ENCODE measurements at regions of chr9 and their contacts with region 1.

Region 1: GRCh38 chr9:94656200-94656599 is 16.9 kb upstream of the FBP1 start:
- DNase-seq: peak; percentile 82
- H3K4me3 Mint-ChIP-seq: peak overlapping the region; percentile 73
- H3K27ac Mint-ChIP-seq: peak overlapping the region; percentile 79
- H3K4me1 Mint-ChIP-seq: peaks cover 20% of the 10 kb centered on the region
- H3K27me3 Mint-ChIP-seq: no peaks in the 10 kb centered on the region

Region 2: DNA sequence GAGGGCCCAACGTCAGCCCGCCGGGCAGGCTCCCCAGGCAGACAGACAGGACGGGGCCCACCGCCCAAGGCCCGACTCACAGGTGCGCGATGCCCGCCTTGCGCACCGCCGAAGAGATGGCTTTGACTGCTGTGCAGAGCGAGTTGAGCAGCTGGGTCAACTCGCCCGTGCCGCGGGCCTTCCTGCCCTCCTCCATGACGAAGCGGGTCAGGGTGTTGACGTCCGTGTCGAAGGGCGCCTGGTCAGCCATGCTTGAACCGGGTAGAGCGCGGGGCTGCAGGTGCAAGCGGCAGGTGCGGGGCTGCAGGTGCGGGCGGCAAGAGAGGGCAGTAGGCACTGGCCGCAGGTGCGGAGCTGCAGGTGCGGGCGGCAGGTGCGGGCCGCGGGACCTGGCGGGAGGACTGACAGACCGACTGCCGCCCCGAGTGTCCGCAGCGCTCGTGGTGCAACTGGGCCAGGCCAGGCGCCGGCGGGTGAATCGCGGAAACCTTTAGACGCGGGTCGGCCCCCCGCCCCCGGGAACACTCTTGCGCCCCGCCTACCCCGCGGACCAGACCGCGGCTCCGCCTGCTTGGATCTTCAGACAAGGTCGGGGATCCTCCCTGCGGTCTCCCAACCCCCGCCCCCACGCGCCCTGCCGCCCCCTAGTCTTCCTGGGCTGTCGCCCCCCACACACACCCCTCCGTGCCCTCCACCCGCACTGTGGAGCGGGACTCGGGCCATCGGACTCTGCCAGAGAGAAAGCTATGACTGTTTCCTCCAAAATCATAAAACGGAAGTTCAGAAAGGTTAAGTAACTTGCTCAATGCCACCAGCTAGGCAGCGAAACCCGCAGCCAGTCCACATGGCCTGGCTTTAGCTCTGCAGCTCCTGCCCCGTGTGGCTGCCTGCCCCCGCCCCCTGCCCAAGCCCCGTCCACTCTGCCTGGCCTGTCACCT is 16.9 kb before region 1 on chr9 and contains the start of gene FBP1:
- CTCF ChIA-PET with region 1: no interaction called
- intact Hi-C with region 1: loop called (anchors 1 kb)
- DNase-seq: peak; percentile 40
- H3K4me3 Mint-ChIP-seq: peak within 1 kb of the TSS; percentile 75
- H3K27ac Mint-ChIP-seq: peak within 1 kb of the TSS; percentile 46
- H3K4me1 Mint-ChIP-seq: peaks cover 12% of the 10 kb centered on the region
- H3K27me3 Mint-ChIP-seq: peaks cover 2% of the 10 kb centered on the region
- total RNA-seq, gene FBP1: 1.5 to 1.9 TPM

Region 3: GRCh38 chr9:94672811-94673487 is 16.7 kb after region 1 on chr9:
- CTCF ChIA-PET with region 1: interaction called, 20 read pairs
- intact Hi-C with region 1: no loop called
- DNase-seq: no peak
- H3K4me3 Mint-ChIP-seq: no peak overlapping the region
- H3K27ac Mint-ChIP-seq: no peak overlapping the region
- H3K4me1 Mint-ChIP-seq: peaks cover 3% of the 10 kb centered on the region
- H3K27me3 Mint-ChIP-seq: no peaks in the 10 kb centered on the region

Measured in activated naive CD4-positive, alpha-beta T cell treated with anti-CD3 and anti-CD28 coated beads for 36 hours (primary cell).